ENCODE measurements at regions of chr4 and their contacts with region 1.

Region 1: GRCh38 chr4:82823062-82823461 is 24.5 kb upstream of the SCD5 start:
- DNase-seq: no peak
- H3K4me3 ChIP-seq: no peak overlapping the region
- H3K27ac ChIP-seq: no peak overlapping the region
- H3K4me1 ChIP-seq: no peaks in the 10 kb centered on the region
- H3K27me3 ChIP-seq: no peaks in the 10 kb centered on the region
- CTCF ChIP-seq: no peak
- POLR2A ChIP-seq: no peak

Region 2: GRCh38 chr4:82543124-82543523 is 279.9 kb before region 1 on chr4:
- intact Hi-C with region 1: no loop called
- DNase-seq: no peak
- H3K4me3 ChIP-seq: no peak overlapping the region
- H3K27ac ChIP-seq: no peak overlapping the region
- H3K4me1 ChIP-seq: no peaks in the 10 kb centered on the region
- H3K27me3 ChIP-seq: no peaks in the 10 kb centered on the region
- CTCF ChIP-seq: no peak
- POLR2A ChIP-seq: no peak

Region 3: GRCh38 chr4:82618103-82618720 is 204.8 kb before region 1 on chr4:
- intact Hi-C with region 1: no loop called
- DNase-seq: peak in 1 of 7 donors; percentile 33
- H3K4me3 ChIP-seq: no peak overlapping the region
- H3K27ac ChIP-seq: no peak overlapping the region
- H3K4me1 ChIP-seq: no peaks in the 10 kb centered on the region
- H3K27me3 ChIP-seq: no peaks in the 10 kb centered on the region
- CTCF ChIP-seq: no peak
- POLR2A ChIP-seq: no peak

Region 4: GRCh38 chr4:82652062-82652461 is 171.0 kb before region 1 on chr4:
- intact Hi-C with region 1: no loop called
- DNase-seq: no peak
- H3K4me3 ChIP-seq: no peak overlapping the region
- H3K27ac ChIP-seq: peak overlapping the region in 1 of 5 donors; percentile 23
- H3K4me1 ChIP-seq: peaks cover 0 to 8% of the 10 kb centered on the region in 2 donors
- H3K27me3 ChIP-seq: no peaks in the 10 kb centered on the region
- CTCF ChIP-seq: no peak
- POLR2A ChIP-seq: no peak

Region 5: DNA sequence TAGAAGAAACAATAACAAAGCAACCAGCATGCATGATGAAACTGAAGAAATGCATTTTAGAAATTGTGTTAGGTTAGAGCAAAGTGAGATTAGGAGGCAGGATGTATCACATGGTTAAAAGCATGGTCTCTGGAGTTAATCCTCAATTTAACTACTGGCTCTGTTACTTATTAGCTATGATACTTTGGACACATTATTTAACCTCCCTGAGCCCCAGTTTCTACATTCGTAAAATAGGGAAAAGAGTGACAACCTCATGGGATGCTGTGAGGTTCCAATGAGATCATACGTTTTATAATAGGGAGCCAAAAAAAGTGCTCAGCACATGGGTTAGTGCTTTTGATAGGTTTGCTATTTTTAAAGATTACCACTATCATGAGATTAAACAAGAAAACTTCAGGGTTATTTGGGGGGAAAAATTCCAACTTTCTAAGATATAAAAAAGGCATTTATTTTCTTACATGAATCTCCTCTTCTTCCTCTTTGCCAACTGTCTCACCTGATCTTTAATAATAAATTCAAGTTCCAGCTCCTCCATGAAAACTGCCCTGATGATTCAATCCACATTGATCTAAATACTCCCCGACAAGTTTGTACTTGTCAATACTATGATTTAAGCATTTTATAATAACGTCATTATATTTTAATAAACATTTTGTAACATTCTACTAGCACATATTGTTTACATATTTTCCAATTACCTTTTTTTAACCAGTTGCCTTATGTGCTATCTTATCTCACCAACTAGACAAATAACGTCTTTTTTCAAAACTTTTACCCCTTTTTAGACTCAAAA is 63.3 kb after region 1 on chr4:
- intact Hi-C with region 1: loop called in 1 of 2 experiments (anchors 10 kb)
- DNase-seq: no peak
- H3K4me3 ChIP-seq: no peak overlapping the region
- H3K27ac ChIP-seq: peak overlapping the region in 1 of 5 donors; percentile 28
- H3K4me1 ChIP-seq: peaks cover 0 to 48% of the 10 kb centered on the region in 2 donors
- H3K27me3 ChIP-seq: no peaks in the 10 kb centered on the region
- CTCF ChIP-seq: no peak
- POLR2A ChIP-seq: no peak

Measured in adrenal gland (tissue), 19 donors.